ENCODE measurements at regions of chrX and their contacts with region 1.

Region 1: GRCh38 chrX:47144626-47145394 is at the starts of genes NDUFB11 and RBM10:
- DNase-seq: peak; percentile 94
- H3K4me3 Mint-ChIP-seq: peak within 1 kb of the TSS; percentile 100
- H3K27ac Mint-ChIP-seq: peak within 1 kb of the TSS; percentile 100
- H3K4me1 Mint-ChIP-seq: peaks cover 9% of the 10 kb centered on the region
- H3K27me3 Mint-ChIP-seq: no peaks in the 10 kb centered on the region
- CTCF ChIP-seq: peak; percentile 78
- total RNA-seq, gene NDUFB11: 102 TPM in 2 replicates
- total RNA-seq, gene RBM10: 47.2 and 49.4 TPM in 2 replicates

Region 2: DNA sequence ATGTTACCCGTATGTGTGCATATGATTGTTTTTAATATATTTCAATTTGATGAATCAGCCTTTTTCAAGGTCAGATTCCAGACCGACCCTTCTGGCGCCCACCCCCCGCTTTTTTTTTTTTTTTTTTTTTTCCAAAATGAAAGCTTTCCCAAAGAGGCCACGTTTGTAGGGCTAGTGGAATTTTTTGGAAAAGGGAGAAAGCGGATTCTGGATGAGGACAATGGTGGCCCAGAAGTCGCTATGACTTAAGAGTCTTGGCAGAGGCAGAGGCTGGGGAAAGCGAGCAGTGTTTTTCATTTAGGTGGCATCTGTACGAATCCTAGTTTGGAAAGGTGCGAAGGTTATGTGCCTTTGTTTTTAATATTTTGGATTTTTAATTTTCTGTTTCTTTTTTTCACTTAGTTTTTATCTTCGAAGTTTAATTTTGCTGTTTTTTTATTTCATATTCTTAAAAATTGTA is 14.9 kb before region 1 on chrX:
- CTCF ChIA-PET with region 1: interaction called, 15 read pairs
- intact Hi-C with region 1: no loop called
- DNase-seq: no peak
- H3K4me3 Mint-ChIP-seq: peak overlapping the region; percentile 90
- H3K27ac Mint-ChIP-seq: no peak overlapping the region
- H3K4me1 Mint-ChIP-seq: no peaks in the 10 kb centered on the region
- H3K27me3 Mint-ChIP-seq: no peaks in the 10 kb centered on the region
- CTCF ChIP-seq: no peak

Region 3: GRCh38 chrX:47420265-47420664 is 275.5 kb after region 1 on chrX:
- CTCF ChIA-PET with region 1: no interaction called
- intact Hi-C with region 1: no loop called
- DNase-seq: no peak
- H3K4me3 Mint-ChIP-seq: no peak overlapping the region
- H3K27ac Mint-ChIP-seq: no peak overlapping the region
- H3K4me1 Mint-ChIP-seq: no peaks in the 10 kb centered on the region
- H3K27me3 Mint-ChIP-seq: no peaks in the 10 kb centered on the region
- CTCF ChIP-seq: no peak

Measured in Calu3 (cell line).